Natural killer cell (primary cell): ENCODE measurements at regions of chr14 and their contacts with region 1.

Region 1: GRCh38 chr14:74249433-74250375 is 10.5 kb downstream of the VSX2 start:
- DNase-seq: no peak
- ATAC-seq: no peak
- H3K4me3 ChIP-seq: no peak overlapping the region
- H3K4me3 Mint-ChIP-seq: no peak overlapping the region
- H3K27ac ChIP-seq: no peak overlapping the region
- H3K27ac Mint-ChIP-seq: no peak overlapping the region
- H3K4me1 ChIP-seq: peaks cover 8% of the 10 kb centered on the region
- H3K4me1 Mint-ChIP-seq: peaks cover 8% of the 10 kb centered on the region in 2 donors
- H3K27me3 ChIP-seq: peaks cover 16% of the 10 kb centered on the region
- H3K27me3 Mint-ChIP-seq: peaks cover 28 to 38% of the 10 kb centered on the region in 2 donors
- CTCF ChIP-seq: no peak

Region 2: GRCh38 chr14:74109369-74109768 is 140.3 kb before region 1 on chr14:
- intact Hi-C with region 1: loop called (anchors 1 kb)
- DNase-seq: no peak
- ATAC-seq: no peak
- H3K4me3 ChIP-seq: no peak overlapping the region
- H3K4me3 Mint-ChIP-seq: no peak overlapping the region
- H3K27ac ChIP-seq: no peak overlapping the region
- H3K27ac Mint-ChIP-seq: no peak overlapping the region
- H3K4me1 ChIP-seq: no peaks in the 10 kb centered on the region
- H3K4me1 Mint-ChIP-seq: no peaks in the 10 kb centered on the region
- H3K27me3 ChIP-seq: no peaks in the 10 kb centered on the region
- H3K27me3 Mint-ChIP-seq: no peaks in the 10 kb centered on the region
- CTCF ChIP-seq: no peak

Region 3: GRCh38 chr14:74217672-74218448 is 31.8 kb before region 1 on chr14:
- intact Hi-C with region 1: loop called (anchors 5 kb)
- DNase-seq: peak; percentile 66 to 81
- ATAC-seq: peak; percentile 83 to 98 (median 97)
- H3K4me3 ChIP-seq: no peak overlapping the region
- H3K4me3 Mint-ChIP-seq: no peak overlapping the region
- H3K27ac ChIP-seq: no peak overlapping the region
- H3K27ac Mint-ChIP-seq: no peak overlapping the region
- H3K4me1 ChIP-seq: peaks cover 8% of the 10 kb centered on the region
- H3K4me1 Mint-ChIP-seq: peaks cover 0 to 4% of the 10 kb centered on the region in 2 donors
- H3K27me3 ChIP-seq: peaks cover 7% of the 10 kb centered on the region
- H3K27me3 Mint-ChIP-seq: peaks cover 15 to 16% of the 10 kb centered on the region in 2 donors
- CTCF ChIP-seq: peak; percentile 81